Mammary epithelial cell (primary cell): ENCODE measurements at regions of chr17 and their contacts with region 1.

Region 1: DNA sequence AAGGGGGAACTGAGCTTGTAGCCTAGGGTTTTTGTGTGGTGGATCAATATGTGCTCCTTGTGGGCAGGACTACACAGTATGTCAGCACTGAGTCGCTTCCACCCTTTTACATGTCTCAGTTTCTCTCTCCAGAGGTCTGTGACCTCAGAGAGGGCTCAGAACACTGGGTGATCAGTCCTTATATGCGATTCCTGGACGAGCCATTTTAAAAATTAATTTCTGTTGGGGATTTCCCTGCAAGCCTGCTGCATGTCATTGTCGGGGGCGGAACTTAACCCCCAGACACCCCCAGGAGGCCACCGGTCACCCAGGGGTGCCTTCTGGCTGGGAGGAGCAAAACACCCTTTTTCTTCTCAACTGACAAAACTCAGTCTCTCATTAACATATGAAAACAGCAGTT is 14.1 kb downstream of the DHRS7B start:
- DNase-seq: no peak
- H3K4me3 ChIP-seq: no peak overlapping the region
- H3K27ac ChIP-seq: no peak overlapping the region
- H3K4me1 ChIP-seq: no peaks in the 10 kb centered on the region
- H3K27me3 ChIP-seq: no peaks in the 10 kb centered on the region
- CTCF ChIP-seq: no peak

Region 2: DNA sequence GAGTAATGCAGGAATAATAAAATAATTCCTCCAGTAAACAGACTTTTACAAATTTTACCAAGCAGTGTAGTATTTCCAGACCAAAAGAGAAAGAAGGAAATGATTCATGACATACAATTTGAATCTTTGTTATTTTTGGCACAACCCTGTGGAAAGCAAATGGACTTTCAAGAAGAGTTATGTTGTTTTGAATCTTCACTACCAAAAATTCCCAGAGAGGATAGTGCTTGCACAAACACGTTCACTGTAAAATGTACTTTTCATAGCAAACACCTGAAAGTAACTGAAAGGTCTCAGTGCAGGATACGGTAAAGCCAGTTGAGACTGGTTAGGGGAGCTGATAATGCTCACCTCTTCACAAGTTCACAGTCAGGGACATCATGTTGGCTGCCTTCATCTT is 205.2 kb before region 1 on chr17:
- CTCF ChIA-PET with region 1: no interaction called
- dilution Hi-C with region 1: no loop called
- in situ Hi-C with region 1: no loop called
- intact Hi-C with region 1: no loop called
- DNase-seq: peak; percentile 96
- H3K4me3 ChIP-seq: peak overlapping the region in 1 of 3 experiments; percentile 9
- H3K27ac ChIP-seq: peak overlapping the region; percentile 76
- H3K4me1 ChIP-seq: peaks cover 31% of the 10 kb centered on the region
- H3K27me3 ChIP-seq: no peaks in the 10 kb centered on the region
- CTCF ChIP-seq: no peak

Region 3: GRCh38 chr17:21061971-21062526 is 78.9 kb before region 1 on chr17:
- CTCF ChIA-PET with region 1: no interaction called
- dilution Hi-C with region 1: no loop called
- in situ Hi-C with region 1: no loop called
- intact Hi-C with region 1: no loop called
- DNase-seq: no peak
- H3K4me3 ChIP-seq: no peak overlapping the region
- H3K27ac ChIP-seq: no peak overlapping the region
- H3K4me1 ChIP-seq: peaks cover 3% of the 10 kb centered on the region
- H3K27me3 ChIP-seq: no peaks in the 10 kb centered on the region
- CTCF ChIP-seq: no peak

Region 4: GRCh38 chr17:21119247-21119918 is 21.5 kb before region 1 on chr17:
- CTCF ChIA-PET with region 1: no interaction called
- dilution Hi-C with region 1: no loop called
- in situ Hi-C with region 1: no loop called
- intact Hi-C with region 1: no loop called
- DNase-seq: peak; percentile 59
- H3K4me3 ChIP-seq: no peak overlapping the region
- H3K27ac ChIP-seq: no peak overlapping the region
- H3K4me1 ChIP-seq: no peaks in the 10 kb centered on the region
- H3K27me3 ChIP-seq: no peaks in the 10 kb centered on the region
- CTCF ChIP-seq: peak; percentile 94 to 98

Region 5: GRCh38 chr17:21193031-21193430 is 52.1 kb after region 1 on chr17:
- CTCF ChIA-PET with region 1: interaction called, 10 read pairs
- dilution Hi-C with region 1: no loop called
- in situ Hi-C with region 1: no loop called
- intact Hi-C with region 1: no loop called
- DNase-seq: no peak
- H3K4me3 ChIP-seq: no peak overlapping the region
- H3K27ac ChIP-seq: no peak overlapping the region
- H3K4me1 ChIP-seq: no peaks in the 10 kb centered on the region
- H3K27me3 ChIP-seq: no peaks in the 10 kb centered on the region
- CTCF ChIP-seq: no peak

Region 6: DNA sequence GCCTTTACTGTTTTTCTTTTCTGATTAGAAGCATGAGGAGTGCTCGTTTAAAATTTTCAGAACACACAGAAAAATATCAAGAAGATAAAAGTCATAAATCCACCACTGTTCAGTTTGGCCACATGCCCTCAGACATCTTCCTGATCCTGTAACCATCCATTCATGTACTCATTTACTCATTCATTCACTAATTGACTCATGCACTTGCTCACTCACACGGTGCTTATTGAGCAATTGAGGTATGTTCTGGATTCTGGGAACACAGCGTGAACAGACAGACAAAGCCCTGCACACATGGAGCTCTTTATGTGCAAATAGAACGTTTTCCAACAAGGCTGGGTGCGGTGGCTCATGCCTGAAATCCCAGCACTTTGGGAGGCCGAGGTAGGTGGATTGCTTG is 122.4 kb after region 1 on chr17:
- CTCF ChIA-PET with region 1: no interaction called
- dilution Hi-C with region 1: no loop called
- in situ Hi-C with region 1: no loop called
- intact Hi-C with region 1: no loop called
- DNase-seq: peak; percentile 93
- H3K4me3 ChIP-seq: no peak overlapping the region
- H3K27ac ChIP-seq: no peak overlapping the region
- H3K4me1 ChIP-seq: peaks cover 11% of the 10 kb centered on the region
- H3K27me3 ChIP-seq: no peaks in the 10 kb centered on the region
- CTCF ChIP-seq: no peak